ENCODE measurements at regions of chr3 and their contacts with region 1.

Region 1: GRCh38 chr3:112333002-112333380 is at the start of gene CD200:
- DNase-seq: peak; percentile 87
- H3K4me3 Mint-ChIP-seq: peak within 1 kb of the TSS; percentile 90
- H3K27ac Mint-ChIP-seq: peak within 1 kb of the TSS; percentile 84
- H3K4me1 Mint-ChIP-seq: peaks cover 44% of the 10 kb centered on the region
- H3K27me3 Mint-ChIP-seq: no peaks in the 10 kb centered on the region
- total RNA-seq, gene CD200: 144 and 151 TPM in 2 replicates

Region 2: GRCh38 chr3:112364291-112364690 is 31.3 kb after region 1 on chr3:
- intact Hi-C with region 1: loop called (anchors 5 kb)
- DNase-seq: no peak
- H3K4me3 Mint-ChIP-seq: peak overlapping the region; percentile 72
- H3K27ac Mint-ChIP-seq: peak overlapping the region; percentile 80
- H3K4me1 Mint-ChIP-seq: peaks cover 35% of the 10 kb centered on the region
- H3K27me3 Mint-ChIP-seq: no peaks in the 10 kb centered on the region

Measured in activated CD4-positive, alpha-beta T cell treated with anti-CD3 and anti-CD28 coated beads, Interleukin-2, amount 10 ng/mL, durations not matched to agents 24 days and 14 days (primary cell).